ENCODE measurements at regions of chr7 and their contacts with region 1.

Region 1: DNA sequence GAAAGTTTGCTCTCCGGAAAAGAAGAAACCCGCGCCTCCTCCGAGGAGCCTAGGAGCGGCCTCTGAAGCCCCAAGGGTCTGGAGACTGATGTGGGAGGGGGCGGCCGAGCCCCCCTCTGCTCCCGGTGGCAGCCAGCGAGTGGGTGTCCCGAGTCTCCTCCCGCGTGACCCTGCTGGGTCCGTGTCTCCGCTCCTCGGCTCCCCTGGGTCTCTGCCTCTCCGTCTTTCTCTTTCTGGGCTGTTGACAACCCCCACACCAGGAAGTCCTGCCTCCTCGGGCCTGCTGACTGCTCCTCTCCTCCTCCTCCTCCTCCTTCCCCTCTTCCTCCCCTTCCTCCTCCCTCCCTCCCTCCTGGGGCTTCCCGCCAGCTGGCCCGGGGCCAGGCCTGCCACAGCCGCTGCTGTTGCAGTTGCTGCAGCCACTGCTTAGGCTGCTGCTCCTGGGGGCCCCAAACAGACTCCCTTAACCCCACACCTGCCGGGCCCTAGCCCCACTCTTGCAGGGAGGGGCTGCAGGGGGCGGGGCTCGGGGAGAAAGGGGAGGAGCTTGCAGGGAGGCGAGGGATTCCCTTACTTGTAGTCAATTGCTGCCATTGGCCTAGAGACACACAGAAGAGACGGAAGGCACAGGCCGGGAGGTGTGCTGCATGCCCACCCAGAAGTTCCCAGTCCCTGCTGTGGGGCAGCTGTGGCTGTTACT is at the start of gene TSC22D4:
- DNase-seq: peak; percentile 95
- H3K4me3 ChIP-seq: peak within 1 kb of the TSS; percentile 99
- H3K27ac ChIP-seq: peak within 1 kb of the TSS; percentile 97
- H3K4me1 ChIP-seq: peaks cover 67% of the 10 kb centered on the region
- H3K27me3 ChIP-seq: no peaks in the 10 kb centered on the region
- CTCF ChIP-seq: no peak
- total RNA-seq, gene TSC22D4: 47.5 TPM

Region 2: DNA sequence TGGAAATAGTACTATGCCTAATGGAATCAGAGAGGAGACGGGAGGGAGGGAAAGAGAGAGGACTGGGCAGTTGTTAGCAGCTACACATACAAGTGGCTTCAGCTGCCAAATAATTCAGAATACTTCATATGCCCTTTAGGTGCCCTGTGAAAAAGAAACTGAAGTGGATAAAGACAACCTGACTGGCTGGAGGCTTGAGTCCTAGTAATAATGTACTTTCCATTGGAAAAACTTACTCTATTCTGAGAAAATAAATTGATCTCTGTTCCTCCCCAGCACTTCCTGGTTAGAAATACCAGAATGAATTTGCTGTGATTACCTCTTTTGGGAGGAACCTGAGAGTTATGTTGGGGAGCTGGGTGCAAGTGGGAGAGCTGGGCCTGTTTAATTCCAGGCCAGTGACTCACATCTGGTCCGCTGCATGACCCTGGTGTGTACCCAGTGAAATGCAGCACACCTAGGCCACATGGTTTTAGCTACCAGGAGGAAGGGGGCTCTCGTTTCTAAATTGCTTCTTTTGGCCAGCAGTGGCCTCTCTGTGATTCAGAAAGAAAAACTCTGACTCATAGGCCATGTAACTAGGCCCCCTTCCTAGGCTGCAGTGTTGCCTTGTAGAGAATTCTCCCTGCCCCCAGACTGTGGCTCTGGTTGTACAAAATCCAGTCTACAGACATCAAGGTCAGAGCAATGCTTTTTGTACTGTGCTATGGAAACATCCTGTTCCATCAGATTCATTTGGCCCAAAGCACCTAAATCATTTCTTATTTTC is 66.4 kb after region 1 on chr7:
- intact Hi-C with region 1: loop called (anchors 10 kb)
- DNase-seq: no peak
- H3K4me3 ChIP-seq: no peak overlapping the region
- H3K27ac ChIP-seq: peak overlapping the region; percentile 90
- H3K4me1 ChIP-seq: peaks cover 60% of the 10 kb centered on the region
- H3K27me3 ChIP-seq: no peaks in the 10 kb centered on the region
- CTCF ChIP-seq: no peak